HCT116 (cell line): ENCODE measurements at regions of chr10 and their contacts with region 1.

Region 1: GRCh38 chr10:89793649-89794254 is 92.4 kb downstream of the KIF20B start:
- DNase-seq: peak; percentile 73
- ATAC-seq: peak; percentile 88
- H3K4me3 ChIP-seq: no peak overlapping the region
- H3K27ac ChIP-seq: peak overlapping the region; percentile 55; the same call in 1 of the 2 replicates
- H3K4me1 ChIP-seq: peaks cover 25 to 26% of the 10 kb centered on the region in 2 experiments; a peak in 3 of 4 replicates
- H3K27me3 ChIP-seq: no peaks in the 10 kb centered on the region
- CTCF ChIP-seq: peak; percentile 65 to 90 (median 84)
- POLR2A ChIP-seq: no peak
- RAD21 ChIP-seq: peak; percentile 98

Region 2: GRCh38 chr10:89314676-89315075 is 479.1 kb before region 1 on chr10:
- CTCF ChIA-PET with region 1: no interaction called
- POLR2A ChIA-PET with region 1: no interaction called
- RAD21 ChIA-PET with region 1: no interaction called
- intact Hi-C with region 1: no loop called
- DNase-seq: no peak
- ATAC-seq: no peak
- H3K4me3 ChIP-seq: no peak overlapping the region
- H3K27ac ChIP-seq: no peak overlapping the region
- H3K4me1 ChIP-seq: no peaks in the 10 kb centered on the region
- H3K27me3 ChIP-seq: no peaks in the 10 kb centered on the region
- CTCF ChIP-seq: no peak
- POLR2A ChIP-seq: no peak
- RAD21 ChIP-seq: no peak

Region 3: DNA sequence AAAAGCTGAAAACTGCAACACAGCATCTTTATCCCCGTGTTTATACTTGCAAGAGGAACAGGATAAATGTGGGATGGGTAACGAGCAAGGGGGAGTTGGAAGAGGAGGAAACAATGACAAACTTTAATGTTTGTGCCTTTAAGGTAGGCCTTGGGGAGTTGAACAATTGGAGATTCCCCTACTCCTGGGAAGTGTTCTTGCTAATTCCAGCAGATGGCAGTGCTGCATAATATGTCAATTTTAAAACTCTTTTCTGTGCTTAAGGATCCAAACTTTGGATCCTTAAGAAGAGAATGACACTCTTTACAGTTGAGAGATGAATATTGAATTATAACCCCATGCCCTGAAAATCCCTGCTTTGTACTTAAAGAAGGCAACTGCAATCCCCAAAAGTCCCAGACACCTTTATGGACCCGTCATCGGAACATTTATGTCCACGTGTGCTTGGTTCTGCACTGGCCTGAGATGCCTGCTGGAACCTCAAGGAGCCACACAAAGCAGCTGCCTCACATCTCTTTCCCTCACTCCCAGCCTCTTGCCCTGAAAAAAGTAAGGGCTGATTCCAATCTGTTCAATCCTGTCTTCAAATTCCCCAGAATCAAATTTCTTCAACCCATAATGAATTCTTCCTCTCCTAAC is 367.4 kb before region 1 on chr10:
- CTCF ChIA-PET with region 1: no interaction called
- POLR2A ChIA-PET with region 1: no interaction called
- RAD21 ChIA-PET with region 1: no interaction called
- intact Hi-C with region 1: loop called (anchors 1 kb)
- DNase-seq: no peak
- ATAC-seq: peak; percentile 87
- H3K4me3 ChIP-seq: no peak overlapping the region
- H3K27ac ChIP-seq: no peak overlapping the region
- H3K4me1 ChIP-seq: peaks cover 0 to 14% of the 10 kb centered on the region in 2 experiments; a peak in 2 of 4 replicates
- H3K27me3 ChIP-seq: no peaks in the 10 kb centered on the region
- CTCF ChIP-seq: peak; percentile 69 to 83 (median 80)
- POLR2A ChIP-seq: no peak
- RAD21 ChIP-seq: peak; percentile 91

Region 4: DNA sequence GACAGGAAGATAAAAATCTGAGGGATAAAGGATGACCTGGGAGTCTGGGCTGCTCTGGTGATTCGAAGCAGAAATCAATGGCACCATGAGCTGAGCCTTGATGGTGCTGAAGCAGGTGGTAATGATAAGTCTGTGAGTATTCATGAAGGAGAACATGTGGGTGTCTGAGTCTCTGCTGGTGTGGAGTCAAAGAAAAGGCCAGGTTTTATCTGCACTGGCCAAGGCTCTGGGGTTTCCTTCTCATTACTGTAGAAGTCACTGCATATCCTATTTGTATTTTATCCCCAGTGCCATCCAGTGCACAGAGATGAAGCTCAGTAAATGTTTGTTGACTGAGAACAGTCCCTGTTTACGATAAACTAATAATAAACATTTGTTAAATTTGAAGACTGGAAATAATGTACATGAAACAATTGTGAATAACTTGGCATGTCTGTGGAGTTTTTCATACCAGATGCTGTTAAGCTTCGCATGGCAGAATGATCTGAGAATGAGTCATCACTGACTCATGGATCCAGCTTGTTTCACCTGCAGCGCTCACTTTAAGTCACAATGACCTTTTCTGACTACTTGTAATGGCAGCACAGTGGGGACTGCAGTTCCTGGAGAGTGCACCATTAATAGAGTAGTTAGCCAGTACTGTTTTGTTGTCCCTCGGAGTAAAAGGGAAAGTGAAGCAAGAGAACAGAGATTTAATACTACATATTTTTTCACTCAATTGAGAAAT is 525.6 kb after region 1 on chr10:
- CTCF ChIA-PET with region 1: no interaction called
- POLR2A ChIA-PET with region 1: no interaction called
- RAD21 ChIA-PET with region 1: no interaction called
- intact Hi-C with region 1: loop called (anchors 10 kb)
- DNase-seq: peak; percentile 96
- ATAC-seq: peak; percentile 87
- H3K4me3 ChIP-seq: no peak overlapping the region
- H3K27ac ChIP-seq: peak overlapping the region; percentile 99
- H3K4me1 ChIP-seq: peaks cover 64 to 74% of the 10 kb centered on the region in 2 experiments
- H3K27me3 ChIP-seq: no peaks in the 10 kb centered on the region
- CTCF ChIP-seq: no peak
- POLR2A ChIP-seq: no peak
- RAD21 ChIP-seq: peak; percentile 39

Region 5: GRCh38 chr10:90751107-90751997 is 957.6 kb after region 1 on chr10:
- CTCF ChIA-PET with region 1: no interaction called
- POLR2A ChIA-PET with region 1: no interaction called
- RAD21 ChIA-PET with region 1: no interaction called
- intact Hi-C with region 1: loop called (anchors 2 kb)
- DNase-seq: peak; percentile 45
- ATAC-seq: peak; percentile 99
- H3K4me3 ChIP-seq: no peak overlapping the region
- H3K27ac ChIP-seq: no peak overlapping the region
- H3K4me1 ChIP-seq: 0 out of 4 replicates have a peak, but pooled peaks cover 0 to 6% of the 10 kb centered on the region in 2 experiments
- H3K27me3 ChIP-seq: no peaks in the 10 kb centered on the region
- CTCF ChIP-seq: peak; percentile 73 to 91 (median 80)
- POLR2A ChIP-seq: no peak
- RAD21 ChIP-seq: peak; percentile 90

Region 6: GRCh38 chr10:90862908-90863514 is 1069.3 kb after region 1 on chr10:
- CTCF ChIA-PET with region 1: interaction called, 3 read pairs
- POLR2A ChIA-PET with region 1: no interaction called
- RAD21 ChIA-PET with region 1: no interaction called
- intact Hi-C with region 1: loop called (anchors 1 kb)
- DNase-seq: no peak
- ATAC-seq: no peak
- H3K4me3 ChIP-seq: no peak overlapping the region
- H3K27ac ChIP-seq: no peak overlapping the region
- H3K4me1 ChIP-seq: peaks cover 18 to 31% of the 10 kb centered on the region in 2 experiments
- H3K27me3 ChIP-seq: no peaks in the 10 kb centered on the region
- CTCF ChIP-seq: peak; percentile 76 to 90 (median 90)
- POLR2A ChIP-seq: no peak
- RAD21 ChIP-seq: peak; percentile 91